ENCODE measurements at regions of chr9 and their contacts with region 1.

Region 1: GRCh38 chr9:35102926-35103659 is at the start of gene STOML2:
- DNase-seq: peak; percentile 94 to 97 (median 95)
- ATAC-seq: peak; percentile 95 to 98 (median 96)
- H3K4me3 ChIP-seq: peak within 1 kb of the TSS; percentile 61 to 91 (median 76)
- H3K27ac ChIP-seq: peak within 1 kb of the TSS; percentile 71 to 94 (median 88)
- H3K4me1 ChIP-seq: peaks cover 0 to 25% (median 20%) of the 10 kb centered on the region in 12 donors
- H3K27me3 ChIP-seq: no peaks in the 10 kb centered on the region
- CTCF ChIP-seq: no peak
- POLR2A ChIP-seq: peak in 1 of 2 donors; percentile 77
- total RNA-seq, gene STOML2: 114 to 162 (median 130) TPM

Region 2: DNA sequence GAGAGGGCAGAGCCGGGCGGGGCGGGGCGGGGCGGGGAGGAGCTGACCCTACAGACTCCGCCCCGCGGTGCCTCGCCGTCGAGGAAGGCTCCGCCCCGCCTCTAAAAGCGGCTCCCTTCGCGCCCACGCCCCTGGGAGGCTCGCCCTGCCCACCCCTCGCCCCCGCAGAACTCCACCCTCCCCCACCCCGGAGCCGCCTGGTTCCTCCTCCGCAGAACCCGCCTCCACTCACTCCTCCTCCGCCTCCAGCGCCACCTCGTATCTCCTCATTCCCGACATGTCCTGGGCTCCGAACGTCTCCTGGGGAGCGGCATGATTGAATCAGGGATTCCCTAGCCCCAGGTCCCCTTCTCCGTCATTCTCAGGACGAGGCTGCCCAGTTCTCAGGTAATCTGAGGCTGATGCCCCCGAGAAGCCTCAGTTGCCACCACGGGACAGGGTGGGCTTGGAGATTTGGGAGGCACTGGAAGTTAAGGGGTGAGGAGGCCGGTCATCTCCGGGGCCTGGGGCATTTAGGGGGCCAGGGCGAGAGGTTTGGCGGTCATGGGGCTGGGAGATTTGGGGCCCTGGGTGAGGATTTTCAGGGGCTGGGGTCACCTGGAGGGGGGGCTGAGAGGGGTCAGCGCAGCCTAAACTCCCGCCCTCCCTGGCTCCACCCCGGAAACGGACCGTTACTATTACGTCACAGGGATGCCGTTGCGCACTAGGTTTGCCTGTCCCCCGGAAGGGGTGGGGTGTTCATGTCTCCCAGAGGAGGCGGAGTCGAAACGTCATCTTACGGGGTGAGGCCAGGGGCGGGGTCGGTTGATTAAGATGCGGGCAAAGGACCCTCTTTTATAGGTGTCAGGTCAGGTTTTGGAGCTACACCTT is 437.5 kb before region 1 on chr9:
- intact Hi-C with region 1: loop called in 1 of 10 experiments (anchors 5 kb)
- DNase-seq: peak; percentile 94 to 97 (median 96)
- ATAC-seq: peak; percentile 89 to 93 (median 90)
- H3K4me3 ChIP-seq: peak overlapping the region; percentile 54 to 91 (median 74)
- H3K27ac ChIP-seq: peak overlapping the region; percentile 88 to 99 (median 98)
- H3K4me1 ChIP-seq: peaks cover 0 to 24% (median 12%) of the 10 kb centered on the region in 12 donors
- H3K27me3 ChIP-seq: no peaks in the 10 kb centered on the region
- CTCF ChIP-seq: peak in 2 of 12 donors; percentile 4 to 20
- POLR2A ChIP-seq: peak in 1 of 2 donors; percentile 35

Region 3: GRCh38 chr9:34989003-34989945 is 113.8 kb before region 1 on chr9 and contains the start of gene DNAJB5:
- intact Hi-C with region 1: loop called in 1 of 10 experiments (anchors 5 kb)
- DNase-seq: peak; percentile 98 to 100 (median 99)
- ATAC-seq: peak; percentile 76 to 86 (median 84)
- H3K4me3 ChIP-seq: peak within 1 kb of the TSS; percentile 65 to 98 (median 82)
- H3K27ac ChIP-seq: peak within 1 kb of the TSS in 11 of 12 donors; percentile 86 to 99 (median 97)
- H3K4me1 ChIP-seq: peaks cover 8 to 54% (median 46%) of the 10 kb centered on the region in 12 donors
- H3K27me3 ChIP-seq: no peaks in the 10 kb centered on the region
- CTCF ChIP-seq: peak in 1 of 12 donors; percentile 17
- POLR2A ChIP-seq: peak; percentile 89 to 93
- total RNA-seq, gene DNAJB5: 33.6 to 134 (median 88.5) TPM